GM12878 (cell line): ENCODE measurements at regions of chr15 and their contacts with region 1.

Region 1: GRCh38 chr15:36883713-36884517 is 216.4 kb downstream of the MEIS2 start:
- DNase-seq: peak; percentile 26
- ATAC-seq: peak; percentile 93
- H3K4me3 ChIP-seq: no peak overlapping the region
- H3K27ac ChIP-seq: no peak overlapping the region
- H3K4me1 ChIP-seq: no peaks in the 10 kb centered on the region; the same call in 1 of the 2 replicates
- H3K27me3 ChIP-seq: peaks cover 12 to 50% of the 10 kb centered on the region in 2 experiments
- CTCF ChIP-seq: peak; percentile 75 to 93 (median 77)
- EP300 ChIP-seq: no peak
- POLR2A ChIP-seq: no peak
- RAD21 ChIP-seq: peak; percentile 93

Region 2: GRCh38 chr15:35141743-35142471 is 1742.0 kb before region 1 on chr15:
- CTCF ChIA-PET with region 1: no interaction called
- POLR2A ChIA-PET with region 1: no interaction called
- RAD21 ChIA-PET with region 1: no interaction called
- SMC1A ChIA-PET with region 1: no interaction called
- in situ Hi-C with region 1: no loop called
- intact Hi-C with region 1: no loop called
- DNase-seq: no peak
- ATAC-seq: peak; percentile 43; the same call in 2 of the 3 replicates
- H3K4me3 ChIP-seq: no peak overlapping the region
- H3K27ac ChIP-seq: no peak overlapping the region
- H3K4me1 ChIP-seq: peaks cover 6% of the 10 kb centered on the region
- H3K27me3 ChIP-seq: no peaks in the 10 kb centered on the region
- CTCF ChIP-seq: no peak
- EP300 ChIP-seq: 0 out of 4 replicates have a peak, but pooled peaks of 1 of the 2 experiments have one; percentile 18
- POLR2A ChIP-seq: no peak
- RAD21 ChIP-seq: no peak

Region 3: GRCh38 chr15:36612063-36612788 is 271.7 kb before region 1 on chr15:
- CTCF ChIA-PET with region 1: no interaction called
- POLR2A ChIA-PET with region 1: no interaction called
- RAD21 ChIA-PET with region 1: no interaction called
- SMC1A ChIA-PET with region 1: no interaction called
- in situ Hi-C with region 1: no loop called
- intact Hi-C with region 1: no loop called
- DNase-seq: no peak
- ATAC-seq: no peak
- H3K4me3 ChIP-seq: no peak overlapping the region
- H3K27ac ChIP-seq: no peak overlapping the region
- H3K4me1 ChIP-seq: peaks cover 4% of the 10 kb centered on the region
- H3K27me3 ChIP-seq: no peaks in the 10 kb centered on the region
- CTCF ChIP-seq: no peak
- EP300 ChIP-seq: no peak
- POLR2A ChIP-seq: no peak
- RAD21 ChIP-seq: no peak

Region 4: GRCh38 chr15:36798366-36798765 is 85.5 kb before region 1 on chr15:
- CTCF ChIA-PET with region 1: no interaction called
- POLR2A ChIA-PET with region 1: no interaction called
- RAD21 ChIA-PET with region 1: no interaction called
- SMC1A ChIA-PET with region 1: no interaction called
- in situ Hi-C with region 1: no loop called
- intact Hi-C with region 1: no loop called
- DNase-seq: no peak
- ATAC-seq: no peak
- H3K4me3 ChIP-seq: no peak overlapping the region
- H3K27ac ChIP-seq: no peak overlapping the region
- H3K4me1 ChIP-seq: no peaks in the 10 kb centered on the region
- H3K27me3 ChIP-seq: no peaks in the 10 kb centered on the region
- CTCF ChIP-seq: no peak
- EP300 ChIP-seq: no peak
- POLR2A ChIP-seq: no peak
- RAD21 ChIP-seq: no peak

Region 5: DNA sequence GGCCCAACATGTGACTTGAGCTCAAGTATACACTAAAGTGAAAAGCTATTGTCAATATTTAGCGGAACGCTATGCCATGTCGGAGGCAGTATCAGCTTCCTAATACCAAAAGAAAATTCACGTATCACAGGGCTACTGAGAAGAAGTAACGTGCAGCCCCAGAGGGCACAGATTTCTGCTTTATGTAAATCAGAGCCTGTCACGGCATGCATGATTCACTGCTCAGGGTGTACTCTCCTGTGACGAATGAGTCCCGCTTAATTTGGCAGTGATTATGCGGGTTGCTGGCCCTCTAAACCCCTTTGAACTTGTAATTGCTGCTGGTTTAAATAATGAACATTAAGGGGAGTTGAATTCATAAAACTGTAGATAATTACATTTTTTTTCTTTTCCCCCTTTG is 131.1 kb after region 1 on chr15:
- CTCF ChIA-PET with region 1: no interaction called
- POLR2A ChIA-PET with region 1: no interaction called
- RAD21 ChIA-PET with region 1: no interaction called
- SMC1A ChIA-PET with region 1: interaction called, 3 read pairs
- in situ Hi-C with region 1: no loop called
- intact Hi-C with region 1: loop called (anchors 10 kb)
- DNase-seq: no peak
- ATAC-seq: peak; percentile 84
- H3K4me3 ChIP-seq: no peak overlapping the region
- H3K27ac ChIP-seq: no peak overlapping the region
- H3K4me1 ChIP-seq: peaks cover 17% of the 10 kb centered on the region
- H3K27me3 ChIP-seq: no peaks in the 10 kb centered on the region
- CTCF ChIP-seq: no peak
- EP300 ChIP-seq: peak; percentile 63 to 71; a peak in 2 of 4 replicates
- POLR2A ChIP-seq: no peak
- RAD21 ChIP-seq: no peak

Region 6: DNA sequence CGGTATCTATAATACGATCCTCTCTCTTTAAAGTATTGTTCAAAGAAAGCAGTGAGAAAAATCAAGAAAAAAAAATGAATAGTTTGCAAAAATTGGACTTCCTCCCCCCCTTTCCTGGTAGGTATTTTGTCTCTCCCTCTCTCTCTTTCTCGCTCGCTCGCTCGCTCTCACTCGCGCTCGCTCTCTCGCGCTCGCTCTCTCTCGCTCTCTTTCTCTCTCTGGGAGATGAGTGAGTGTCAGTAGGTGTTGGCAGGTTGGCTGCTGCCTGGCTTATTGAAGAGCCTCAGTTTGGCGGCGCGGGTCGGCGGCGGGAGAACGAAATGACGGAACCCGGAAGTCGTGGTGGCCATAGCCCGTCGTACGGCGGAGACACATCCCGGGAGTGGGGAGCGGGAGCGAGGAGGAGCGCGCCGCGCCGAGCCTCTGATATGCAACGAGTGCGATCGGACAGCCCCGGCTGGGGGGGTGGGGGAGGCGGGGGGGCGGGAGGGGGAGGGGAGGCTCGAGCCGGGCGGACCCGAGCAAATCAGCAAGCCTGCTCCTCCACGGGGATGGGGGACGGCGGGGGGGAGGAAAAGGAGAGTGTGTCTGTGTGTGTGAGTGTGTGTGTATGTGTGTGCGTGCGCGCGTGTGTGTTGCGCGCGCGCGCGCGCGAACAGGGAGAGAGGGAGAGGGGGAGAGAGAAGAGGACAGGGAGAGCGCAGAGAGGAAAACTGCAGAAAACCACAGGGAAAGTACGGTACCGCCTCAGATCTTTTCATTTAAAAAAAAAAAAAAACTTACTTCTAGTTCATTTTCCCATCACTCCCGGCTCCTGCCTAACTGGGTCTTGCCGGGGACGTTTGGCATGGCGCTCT is 216.4 kb after region 1 on chr15 and contains the start of gene MEIS2:
- CTCF ChIA-PET with region 1: interaction called, 66 read pairs
- POLR2A ChIA-PET with region 1: no interaction called
- RAD21 ChIA-PET with region 1: interaction called, 39 read pairs
- SMC1A ChIA-PET with region 1: interaction called, 130 read pairs
- in situ Hi-C with region 1: loop called (anchors 5 kb)
- intact Hi-C with region 1: no loop called
- DNase-seq: peak; percentile 37
- ATAC-seq: peak; percentile 53
- H3K4me3 ChIP-seq: peak within 1 kb of the TSS; percentile 87
- H3K27ac ChIP-seq: peak within 1 kb of the TSS; percentile 88
- H3K4me1 ChIP-seq: peaks cover 7% of the 10 kb centered on the region
- H3K27me3 ChIP-seq: peaks cover 0 to 8% of the 10 kb centered on the region in 2 experiments; a peak in 2 of 4 replicates
- CTCF ChIP-seq: no peak
- EP300 ChIP-seq: no peak
- POLR2A ChIP-seq: peak; percentile 88
- RAD21 ChIP-seq: no peak
- polyA plus RNA-seq, gene MEIS2: 9.2 to 9.4 TPM

Region 7: DNA sequence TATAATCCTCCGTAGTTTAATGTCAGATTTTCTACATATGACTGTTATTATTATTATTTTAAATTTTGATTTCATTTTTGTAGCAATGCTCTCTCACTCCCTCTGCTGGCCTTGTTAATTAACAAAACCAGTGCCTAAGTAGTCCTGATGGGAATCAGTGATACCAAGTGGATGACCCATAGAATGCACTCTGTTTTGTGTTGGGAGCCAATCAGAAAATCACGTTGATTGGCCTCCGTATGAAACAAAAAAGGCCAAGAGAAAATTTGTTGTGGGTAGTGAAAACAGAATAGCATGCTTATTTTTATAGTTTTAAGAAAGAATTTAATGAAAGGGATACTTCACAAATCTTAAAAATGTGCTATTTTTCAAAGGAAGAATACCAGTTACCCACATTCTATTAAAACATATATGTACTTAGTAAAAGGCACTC is 250.8 kb after region 1 on chr15:
- CTCF ChIA-PET with region 1: interaction called, 50 read pairs
- POLR2A ChIA-PET with region 1: no interaction called
- RAD21 ChIA-PET with region 1: interaction called, 5 read pairs
- SMC1A ChIA-PET with region 1: interaction called, 5 read pairs
- in situ Hi-C with region 1: no loop called
- intact Hi-C with region 1: loop called (anchors 2 kb)
- DNase-seq: no peak
- ATAC-seq: peak; percentile 80
- H3K4me3 ChIP-seq: no peak overlapping the region
- H3K27ac ChIP-seq: no peak overlapping the region
- H3K4me1 ChIP-seq: peaks cover 4% of the 10 kb centered on the region; the same call in 1 of the 2 replicates
- H3K27me3 ChIP-seq: peaks cover 0 to 2% of the 10 kb centered on the region in 2 experiments; a peak in 2 of 4 replicates
- CTCF ChIP-seq: peak; percentile 53 to 60 (median 55); a peak in 5 of 6 replicates
- EP300 ChIP-seq: no peak
- POLR2A ChIP-seq: no peak
- RAD21 ChIP-seq: peak; percentile 34

Region 8: DNA sequence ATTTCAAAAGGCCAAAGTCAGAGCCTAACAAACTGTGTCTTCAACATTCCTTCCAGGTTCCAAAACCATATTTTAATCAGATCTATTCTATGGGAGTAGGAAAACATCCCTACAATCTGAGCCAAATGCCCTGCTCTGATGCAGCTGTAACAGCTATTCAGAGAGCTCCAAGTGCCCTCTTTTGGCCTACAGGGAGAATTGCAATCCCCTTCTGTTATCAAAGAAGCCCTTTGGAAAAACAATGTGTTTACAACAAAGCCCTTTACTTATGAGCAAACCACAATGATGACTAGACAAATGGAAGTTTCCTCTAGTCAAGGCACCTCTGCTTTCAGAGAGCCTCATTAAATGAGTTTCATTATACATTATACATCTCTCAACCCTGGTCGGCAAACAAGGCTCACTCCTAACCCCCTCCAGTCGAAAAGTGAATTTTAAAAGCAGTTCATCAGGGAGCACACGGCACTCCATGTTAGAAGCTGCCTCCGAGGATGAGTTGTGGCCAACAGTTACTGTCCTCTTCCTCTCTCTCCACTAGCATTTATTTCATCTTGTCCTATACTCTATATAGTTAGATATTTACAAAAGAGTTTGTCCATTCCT is 1008.0 kb after region 1 on chr15:
- CTCF ChIA-PET with region 1: no interaction called
- POLR2A ChIA-PET with region 1: no interaction called
- RAD21 ChIA-PET with region 1: no interaction called
- SMC1A ChIA-PET with region 1: no interaction called
- in situ Hi-C with region 1: loop called (anchors 25 kb)
- intact Hi-C with region 1: no loop called
- DNase-seq: no peak
- ATAC-seq: peak; percentile 75
- H3K4me3 ChIP-seq: no peak overlapping the region
- H3K27ac ChIP-seq: no peak overlapping the region
- H3K4me1 ChIP-seq: no peaks in the 10 kb centered on the region
- H3K27me3 ChIP-seq: no peaks in the 10 kb centered on the region
- CTCF ChIP-seq: peak; percentile 72 to 76 (median 75)
- EP300 ChIP-seq: no peak
- POLR2A ChIP-seq: no peak
- RAD21 ChIP-seq: peak; percentile 73